Testis (tissue), 5 donors: ENCODE measurements at regions of chr16 and their contacts with region 1.

Region 1: DNA sequence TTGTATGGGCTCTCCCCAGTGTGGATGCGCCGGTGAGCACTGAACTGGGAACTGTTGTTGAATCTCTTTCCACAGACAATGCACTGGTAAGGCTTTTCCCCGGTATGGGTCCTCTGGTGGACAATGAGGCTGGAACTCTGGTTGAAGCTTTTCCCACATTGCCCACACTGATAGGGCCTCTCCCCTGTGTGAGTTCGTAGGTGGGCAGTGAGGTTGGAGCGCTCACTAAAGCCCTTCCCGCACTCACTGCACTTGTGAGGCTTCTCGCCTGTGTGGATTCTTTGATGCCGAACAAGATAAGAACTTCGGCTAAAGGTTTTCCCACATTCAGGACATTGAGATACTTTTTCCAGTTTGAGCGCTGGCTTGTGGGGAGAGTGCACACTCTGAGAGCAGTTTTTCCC is 17.8 kb downstream of the ZSCAN32 start:
- DNase-seq: no peak
- H3K4me3 ChIP-seq: no peak overlapping the region
- H3K27ac ChIP-seq: no peak overlapping the region
- H3K4me1 ChIP-seq: no peaks in the 10 kb centered on the region
- H3K27me3 ChIP-seq: no peaks in the 10 kb centered on the region
- CTCF ChIP-seq: no peak
- POLR2A ChIP-seq: no peak

Region 2: GRCh38 chr16:3317315-3317999 is 65.6 kb before region 1 on chr16:
- intact Hi-C with region 1: loop called (anchors 10 kb)
- DNase-seq: no peak
- H3K4me3 ChIP-seq: no peak overlapping the region
- H3K27ac ChIP-seq: no peak overlapping the region
- H3K4me1 ChIP-seq: no peaks in the 10 kb centered on the region
- H3K27me3 ChIP-seq: no peaks in the 10 kb centered on the region
- CTCF ChIP-seq: no peak
- POLR2A ChIP-seq: no peak